HCT116 (cell line): ENCODE measurements at regions of chr10 and their contacts with region 1.

Region 1: DNA sequence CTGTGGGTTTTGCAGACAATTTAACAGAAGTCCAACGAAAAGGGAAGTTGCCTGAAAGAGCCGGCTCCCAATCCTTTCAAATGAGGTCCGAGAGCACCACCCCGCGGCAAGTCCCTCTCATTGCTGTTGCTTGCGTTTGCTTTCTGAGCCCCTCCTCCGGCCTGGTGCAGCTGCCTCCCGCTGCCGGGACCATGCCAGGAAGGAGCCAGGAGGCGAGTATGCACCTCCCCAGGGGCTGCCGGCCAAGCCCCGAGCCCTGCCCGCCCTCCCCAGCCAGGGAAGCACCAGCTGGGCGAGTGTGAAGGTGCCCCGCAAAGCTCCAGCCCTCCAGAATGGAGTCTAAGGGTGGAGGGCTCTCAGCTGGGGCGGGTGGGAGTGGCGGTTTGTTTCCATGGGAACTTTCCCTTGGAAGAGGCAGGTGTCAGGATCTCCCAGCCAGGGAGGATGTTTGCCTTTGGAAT is 25.8 kb upstream of the PPP2R2D start:
- DNase-seq: peak; percentile 48
- ATAC-seq: peak; percentile 93
- H3K4me3 ChIP-seq: no peak overlapping the region
- H3K27ac ChIP-seq: no peak overlapping the region
- H3K4me1 ChIP-seq: no peaks in the 10 kb centered on the region
- H3K27me3 ChIP-seq: no peaks in the 10 kb centered on the region
- CTCF ChIP-seq: peak; percentile 44 to 59 (median 47); a peak in 5 of 6 replicates
- POLR2A ChIP-seq: no peak
- RAD21 ChIP-seq: peak; percentile 81

Region 2: DNA sequence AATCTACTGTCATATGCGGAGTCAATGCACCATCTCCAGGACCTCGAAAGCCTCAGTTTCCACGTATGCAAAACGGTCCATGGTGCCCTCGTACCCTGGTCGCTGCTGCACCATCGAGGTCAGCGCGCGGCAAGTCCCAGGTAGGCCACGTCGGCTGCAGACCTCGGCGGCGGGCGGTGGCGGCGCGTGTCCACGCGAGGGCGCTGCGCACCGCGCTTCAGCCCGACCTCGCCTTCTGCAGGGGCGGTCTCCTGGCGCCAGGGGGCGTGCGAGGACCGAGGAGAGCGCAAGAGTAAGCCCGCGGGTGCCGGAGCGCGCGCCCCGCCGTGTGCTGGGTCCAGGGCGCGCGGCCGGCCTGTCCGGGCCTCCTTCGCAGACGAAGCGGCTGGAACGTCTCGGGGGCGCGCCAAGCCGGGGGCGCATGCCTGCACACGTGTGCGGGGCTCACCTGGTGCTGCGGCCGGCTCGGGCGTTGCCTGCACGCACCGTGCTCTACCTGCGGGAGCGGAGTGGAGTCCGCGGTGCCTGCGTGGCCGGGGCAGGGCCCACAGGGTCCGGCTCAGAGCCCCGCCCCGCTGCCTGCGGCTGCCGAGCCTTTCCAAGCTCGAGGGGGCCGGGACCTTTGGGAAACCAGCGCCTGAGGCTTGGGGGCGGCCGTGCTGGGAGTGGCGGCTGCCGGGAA is 1684.8 kb before region 1 on chr10:
- CTCF ChIA-PET with region 1: no interaction called
- POLR2A ChIA-PET with region 1: no interaction called
- RAD21 ChIA-PET with region 1: no interaction called
- intact Hi-C with region 1: loop called (anchors 2 kb)
- DNase-seq: peak; percentile 18
- ATAC-seq: peak; percentile 89
- H3K4me3 ChIP-seq: no peak overlapping the region
- H3K27ac ChIP-seq: no peak overlapping the region
- H3K4me1 ChIP-seq: no peaks in the 10 kb centered on the region
- H3K27me3 ChIP-seq: no peaks in the 10 kb centered on the region
- CTCF ChIP-seq: peak; percentile 77 to 98 (median 80)
- POLR2A ChIP-seq: no peak
- RAD21 ChIP-seq: peak; percentile 81

Region 3: GRCh38 chr10:131242007-131242406 is 633.0 kb before region 1 on chr10:
- CTCF ChIA-PET with region 1: no interaction called
- POLR2A ChIA-PET with region 1: no interaction called
- RAD21 ChIA-PET with region 1: no interaction called
- intact Hi-C with region 1: loop called (anchors 1 kb)
- DNase-seq: peak; percentile 0
- ATAC-seq: peak; percentile 52; the same call in 1 of the 2 replicates
- H3K4me3 ChIP-seq: no peak overlapping the region
- H3K27ac ChIP-seq: no peak overlapping the region
- H3K4me1 ChIP-seq: no peaks in the 10 kb centered on the region
- H3K27me3 ChIP-seq: no peaks in the 10 kb centered on the region
- CTCF ChIP-seq: peak in 2 of 3 experiments; percentile 48 to 49; a peak in 4 of 6 replicates
- POLR2A ChIP-seq: no peak
- RAD21 ChIP-seq: peak; percentile 28; the same call in 1 of the 2 replicates

Region 4: GRCh38 chr10:131453594-131454355 is 421.2 kb before region 1 on chr10:
- CTCF ChIA-PET with region 1: no interaction called
- POLR2A ChIA-PET with region 1: no interaction called
- RAD21 ChIA-PET with region 1: no interaction called
- intact Hi-C with region 1: loop called (anchors 10 kb)
- DNase-seq: peak; percentile 21
- ATAC-seq: peak; percentile 76
- H3K4me3 ChIP-seq: no peak overlapping the region
- H3K27ac ChIP-seq: no peak overlapping the region
- H3K4me1 ChIP-seq: no peaks in the 10 kb centered on the region
- H3K27me3 ChIP-seq: peaks cover 4% of the 10 kb centered on the region; the same call in 1 of the 2 replicates
- CTCF ChIP-seq: peak; percentile 42 to 57 (median 52); a peak in 5 of 6 replicates
- POLR2A ChIP-seq: no peak
- RAD21 ChIP-seq: peak; percentile 52

Region 5: GRCh38 chr10:131556897-131557495 is 318.0 kb before region 1 on chr10:
- CTCF ChIA-PET with region 1: no interaction called
- POLR2A ChIA-PET with region 1: no interaction called
- RAD21 ChIA-PET with region 1: no interaction called
- intact Hi-C with region 1: no loop called
- DNase-seq: no peak
- ATAC-seq: no peak
- H3K4me3 ChIP-seq: no peak overlapping the region
- H3K27ac ChIP-seq: no peak overlapping the region
- H3K4me1 ChIP-seq: no peaks in the 10 kb centered on the region
- H3K27me3 ChIP-seq: 0 out of 2 replicates have a peak, but pooled peaks cover 9% of the 10 kb centered on the region
- CTCF ChIP-seq: no peak
- POLR2A ChIP-seq: no peak
- RAD21 ChIP-seq: no peak

Region 6: GRCh38 chr10:131810805-131811629 is 64.0 kb before region 1 on chr10:
- CTCF ChIA-PET with region 1: no interaction called
- POLR2A ChIA-PET with region 1: no interaction called
- RAD21 ChIA-PET with region 1: no interaction called
- intact Hi-C with region 1: no loop called
- DNase-seq: no peak
- ATAC-seq: no peak
- H3K4me3 ChIP-seq: no peak overlapping the region
- H3K27ac ChIP-seq: no peak overlapping the region
- H3K4me1 ChIP-seq: no peaks in the 10 kb centered on the region
- H3K27me3 ChIP-seq: 0 out of 2 replicates have a peak, but pooled peaks cover 6% of the 10 kb centered on the region
- CTCF ChIP-seq: no peak
- POLR2A ChIP-seq: no peak
- RAD21 ChIP-seq: no peak

Region 7: DNA sequence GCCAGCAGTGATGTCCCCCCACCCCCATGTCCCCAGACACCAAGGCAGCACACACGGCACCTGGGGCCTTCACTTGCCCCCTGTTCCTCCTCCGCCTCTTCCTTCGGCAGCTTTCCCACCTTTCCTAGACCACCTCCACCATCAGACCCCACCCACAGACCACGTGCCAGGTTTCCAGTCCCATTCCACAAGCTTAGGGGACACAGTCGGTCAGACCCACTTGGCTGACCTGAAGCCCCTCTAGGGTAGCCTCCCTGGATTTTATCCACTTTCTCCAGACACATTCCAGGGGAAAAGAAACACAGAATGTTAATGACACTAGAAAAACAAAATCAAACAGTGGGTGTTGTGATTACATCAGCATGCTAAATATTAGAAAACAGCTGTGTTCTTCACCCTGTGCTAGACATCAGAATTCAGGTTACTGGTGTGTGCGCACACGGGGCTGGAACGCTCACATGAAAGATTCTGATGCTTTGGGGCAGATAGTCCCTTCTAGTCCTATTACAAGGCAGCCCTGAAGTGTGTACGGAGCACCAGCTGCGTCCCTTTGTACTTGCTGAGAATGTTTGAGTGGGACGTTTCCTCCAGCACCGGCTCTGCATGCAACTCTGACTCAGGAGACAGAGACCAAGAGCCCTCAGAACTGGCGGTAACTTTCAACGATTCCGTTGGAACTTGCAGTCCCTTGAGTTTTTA is 49.7 kb before region 1 on chr10:
- CTCF ChIA-PET with region 1: no interaction called
- POLR2A ChIA-PET with region 1: no interaction called
- RAD21 ChIA-PET with region 1: no interaction called
- intact Hi-C with region 1: no loop called
- DNase-seq: no peak
- ATAC-seq: no peak
- H3K4me3 ChIP-seq: no peak overlapping the region
- H3K27ac ChIP-seq: no peak overlapping the region
- H3K4me1 ChIP-seq: no peaks in the 10 kb centered on the region
- H3K27me3 ChIP-seq: no peaks in the 10 kb centered on the region
- CTCF ChIP-seq: no peak
- POLR2A ChIP-seq: no peak
- RAD21 ChIP-seq: no peak

Region 8: DNA sequence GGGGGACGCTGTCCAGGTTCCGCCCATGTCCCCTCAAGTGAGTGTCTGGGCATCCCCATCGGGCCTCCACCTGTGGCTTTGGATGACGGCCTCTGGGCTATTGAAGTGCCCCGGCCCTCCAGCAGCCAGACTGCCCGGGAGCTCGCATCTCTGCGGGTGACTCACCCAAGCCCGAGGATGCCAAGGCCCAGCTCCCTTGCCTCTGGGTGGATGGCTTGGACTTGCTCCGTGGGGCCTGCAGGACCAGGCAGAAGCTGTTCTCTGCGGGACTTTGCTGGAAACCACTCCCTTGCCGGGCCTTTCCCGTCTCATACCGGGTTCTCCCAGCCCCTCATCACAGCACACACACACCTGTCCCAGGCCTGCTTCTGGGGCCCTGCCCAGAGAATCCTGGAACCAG is 334.1 kb after region 1 on chr10:
- CTCF ChIA-PET with region 1: no interaction called
- POLR2A ChIA-PET with region 1: no interaction called
- RAD21 ChIA-PET with region 1: no interaction called
- intact Hi-C with region 1: no loop called
- DNase-seq: no peak
- ATAC-seq: no peak
- H3K4me3 ChIP-seq: no peak overlapping the region
- H3K27ac ChIP-seq: no peak overlapping the region
- H3K4me1 ChIP-seq: no peaks in the 10 kb centered on the region
- H3K27me3 ChIP-seq: no peaks in the 10 kb centered on the region
- CTCF ChIP-seq: no peak
- POLR2A ChIP-seq: no peak
- RAD21 ChIP-seq: no peak